ENCODE measurements at regions of chr12 and their contacts with region 1.

Region 1: GRCh38 chr12:109518820-109519665 is 41.6 kb downstream of the UBE3B start:
- DNase-seq: peak; percentile 61 to 76
- ATAC-seq: peak in 7 of 8 donors; percentile 29 to 83 (median 69)
- H3K4me3 ChIP-seq: no peak overlapping the region
- H3K27ac ChIP-seq: peak overlapping the region in 9 of 10 donors; percentile 62 to 93 (median 82)
- H3K4me1 ChIP-seq: peaks cover 9 to 56% (median 37%) of the 10 kb centered on the region in 9 donors
- H3K27me3 ChIP-seq: no peaks in the 10 kb centered on the region
- CTCF ChIP-seq: peak; percentile 76 to 92 (median 90)

Region 2: GRCh38 chr12:107873223-107873622 is 1645.8 kb before region 1 on chr12:
- intact Hi-C with region 1: no loop called
- DNase-seq: no peak
- ATAC-seq: no peak
- H3K4me3 ChIP-seq: no peak overlapping the region
- H3K27ac ChIP-seq: no peak overlapping the region
- H3K4me1 ChIP-seq: no peaks in the 10 kb centered on the region
- H3K27me3 ChIP-seq: peaks cover 0 to 55% (median 39%) of the 10 kb centered on the region in 7 donors
- CTCF ChIP-seq: no peak

Region 3: DNA sequence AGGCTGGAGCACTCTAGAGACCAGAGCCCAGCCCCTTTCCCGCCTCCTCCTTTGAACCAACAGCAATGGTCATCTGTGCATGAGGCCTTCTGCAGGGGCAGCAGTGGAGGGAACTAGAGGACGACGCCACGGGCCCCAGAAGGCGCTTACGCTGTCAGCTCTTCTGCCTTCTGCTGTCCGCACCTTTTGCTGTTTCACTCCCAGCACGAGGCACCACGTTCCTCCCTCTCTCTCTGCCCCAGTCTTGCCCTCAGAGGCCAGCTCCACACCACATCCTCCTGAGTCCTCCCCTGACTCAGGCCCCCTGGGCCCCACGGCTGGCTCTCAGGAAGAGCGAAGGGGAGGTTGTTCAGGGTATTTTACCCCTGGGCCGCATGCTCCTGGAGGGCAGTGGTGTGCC is 38.8 kb after region 1 on chr12:
- intact Hi-C with region 1: no loop called
- DNase-seq: no peak
- ATAC-seq: no peak
- H3K4me3 ChIP-seq: no peak overlapping the region
- H3K27ac ChIP-seq: no peak overlapping the region
- H3K4me1 ChIP-seq: peaks cover 0 to 1% (median 0%) of the 10 kb centered on the region in 9 donors
- H3K27me3 ChIP-seq: peaks cover 0 to 2% (median 0%) of the 10 kb centered on the region in 7 donors
- CTCF ChIP-seq: no peak

Region 4: DNA sequence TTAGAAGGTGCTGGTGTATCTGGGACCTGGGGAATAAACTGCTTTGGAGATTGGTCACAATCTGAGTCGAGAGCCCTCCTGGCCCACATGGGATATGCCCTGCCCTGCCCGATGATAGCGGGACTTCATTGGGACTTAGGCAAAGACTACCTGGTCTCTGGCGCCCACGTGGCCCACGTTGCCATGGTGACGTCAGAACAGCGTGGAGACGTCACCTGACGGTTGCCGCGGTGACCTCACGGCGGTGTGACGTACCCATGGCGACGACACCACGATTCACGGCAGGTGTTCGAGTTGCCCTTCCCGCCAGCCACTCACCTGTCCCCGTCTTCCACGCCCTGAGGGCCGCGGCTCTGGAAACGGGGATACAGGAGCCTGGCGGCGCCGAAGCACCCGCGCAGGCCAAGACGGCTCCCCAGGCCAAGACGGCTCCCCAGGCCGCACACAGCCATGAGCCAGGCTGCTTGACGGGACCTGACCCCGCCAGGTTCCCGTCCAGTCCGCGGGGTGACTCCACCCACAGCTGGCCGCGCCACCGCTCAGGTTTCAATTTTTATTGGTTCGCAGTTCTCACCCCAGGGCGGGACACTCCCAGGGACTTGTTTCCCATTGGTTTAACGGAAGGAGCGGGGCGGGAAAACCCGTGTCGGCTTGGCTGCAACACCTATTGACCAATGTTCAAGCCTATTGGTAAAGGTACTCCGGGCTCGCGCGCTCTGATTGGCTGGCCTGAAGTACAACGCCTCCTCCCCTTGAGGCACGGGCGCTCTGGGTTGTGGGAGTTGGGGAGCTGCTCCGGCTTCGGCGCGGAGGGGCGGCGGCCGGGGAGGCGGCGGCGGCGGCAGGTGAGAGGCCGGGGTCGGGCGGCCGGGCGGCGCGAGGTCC is 54.2 kb after region 1 on chr12 and contains the starts of genes MMAB and MVK:
- intact Hi-C with region 1: loop called in 5 of 10 experiments (anchors 2 to 10 kb)
- DNase-seq: peak; percentile 97 to 99
- ATAC-seq: peak; percentile 97 to 100 (median 99)
- H3K4me3 ChIP-seq: peak within 1 kb of the TSS; percentile 48 to 91 (median 80)
- H3K27ac ChIP-seq: peak within 1 kb of the TSS; percentile 72 to 92 (median 88)
- H3K4me1 ChIP-seq: peaks cover 4 to 37% (median 18%) of the 10 kb centered on the region in 9 donors
- H3K27me3 ChIP-seq: no peaks in the 10 kb centered on the region
- CTCF ChIP-seq: no peak
- total RNA-seq, gene MMAB: 27.7 to 50.7 (median 43.8) TPM
- total RNA-seq, gene MVK: 7.9 to 12.0 (median 9.2) TPM

Region 5: GRCh38 chr12:109597795-109598427 is 78.9 kb after region 1 on chr12:
- intact Hi-C with region 1: loop called in 5 of 10 experiments (anchors 5 kb)
- DNase-seq: peak; percentile 86 to 90
- ATAC-seq: peak; percentile 75 to 93 (median 91)
- H3K4me3 ChIP-seq: no peak overlapping the region
- H3K27ac ChIP-seq: no peak overlapping the region
- H3K4me1 ChIP-seq: peaks cover 0 to 26% (median 12%) of the 10 kb centered on the region in 9 donors
- H3K27me3 ChIP-seq: no peaks in the 10 kb centered on the region
- CTCF ChIP-seq: peak; percentile 90 to 99 (median 97)

Region 6: DNA sequence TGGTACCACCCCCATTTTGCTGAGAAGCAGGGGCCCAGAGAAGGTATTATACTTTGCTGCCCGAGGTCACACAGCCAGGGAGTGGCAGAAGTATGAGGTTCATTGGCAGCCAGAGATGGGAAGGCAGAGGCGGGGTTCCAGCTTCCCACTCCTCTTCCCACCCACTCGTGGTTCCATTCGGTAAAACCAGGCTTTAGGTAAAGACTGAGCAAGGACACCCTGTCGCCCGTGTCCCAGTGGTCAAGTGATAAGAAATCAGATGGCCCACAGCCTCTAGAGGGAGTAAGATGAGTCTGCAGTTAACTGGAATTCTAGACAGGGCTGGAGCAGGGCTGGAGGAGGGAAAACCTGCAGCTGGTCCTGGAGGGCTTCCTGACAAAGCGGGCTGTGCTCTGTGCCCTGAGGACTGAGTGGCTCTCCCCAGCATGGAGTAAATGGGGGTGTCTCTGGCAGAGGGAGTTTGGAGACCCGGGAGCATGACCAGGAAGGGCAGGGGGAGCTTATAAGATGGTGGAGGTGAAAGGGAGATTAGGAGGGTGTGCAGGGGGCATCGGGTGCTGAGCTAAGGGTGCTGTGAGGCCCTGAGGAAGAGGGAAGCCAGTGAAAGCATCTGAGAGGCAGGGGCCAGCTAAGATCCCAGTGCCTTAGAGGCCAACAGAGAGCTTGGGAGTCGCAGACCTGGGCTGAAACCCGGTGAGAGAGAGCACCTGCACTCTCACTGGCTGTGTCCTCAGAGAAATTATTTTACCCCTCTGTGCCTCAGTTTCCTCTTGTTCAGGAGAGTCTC is 200.4 kb after region 1 on chr12:
- intact Hi-C with region 1: loop called in 2 of 10 experiments (anchors 2 to 5 kb)
- DNase-seq: no peak
- ATAC-seq: no peak
- H3K4me3 ChIP-seq: no peak overlapping the region
- H3K27ac ChIP-seq: peak overlapping the region; percentile 74 to 94 (median 88)
- H3K4me1 ChIP-seq: peaks cover 15 to 97% (median 58%) of the 10 kb centered on the region in 9 donors
- H3K27me3 ChIP-seq: peaks cover 0 to 49% (median 0%) of the 10 kb centered on the region in 7 donors
- CTCF ChIP-seq: peak in 1 of 9 donors; percentile 9

Region 7: GRCh38 chr12:109782326-109782703 is 263.3 kb after region 1 on chr12:
- intact Hi-C with region 1: loop called in 2 of 10 experiments (anchors 5 kb)
- DNase-seq: no peak
- ATAC-seq: no peak
- H3K4me3 ChIP-seq: no peak overlapping the region
- H3K27ac ChIP-seq: no peak overlapping the region
- H3K4me1 ChIP-seq: no peaks in the 10 kb centered on the region
- H3K27me3 ChIP-seq: no peaks in the 10 kb centered on the region
- CTCF ChIP-seq: no peak

Measured in heart right ventricle (tissue), 16 donors.